ENCODE measurements at regions of chr12 and their contacts with region 1.

Region 1: DNA sequence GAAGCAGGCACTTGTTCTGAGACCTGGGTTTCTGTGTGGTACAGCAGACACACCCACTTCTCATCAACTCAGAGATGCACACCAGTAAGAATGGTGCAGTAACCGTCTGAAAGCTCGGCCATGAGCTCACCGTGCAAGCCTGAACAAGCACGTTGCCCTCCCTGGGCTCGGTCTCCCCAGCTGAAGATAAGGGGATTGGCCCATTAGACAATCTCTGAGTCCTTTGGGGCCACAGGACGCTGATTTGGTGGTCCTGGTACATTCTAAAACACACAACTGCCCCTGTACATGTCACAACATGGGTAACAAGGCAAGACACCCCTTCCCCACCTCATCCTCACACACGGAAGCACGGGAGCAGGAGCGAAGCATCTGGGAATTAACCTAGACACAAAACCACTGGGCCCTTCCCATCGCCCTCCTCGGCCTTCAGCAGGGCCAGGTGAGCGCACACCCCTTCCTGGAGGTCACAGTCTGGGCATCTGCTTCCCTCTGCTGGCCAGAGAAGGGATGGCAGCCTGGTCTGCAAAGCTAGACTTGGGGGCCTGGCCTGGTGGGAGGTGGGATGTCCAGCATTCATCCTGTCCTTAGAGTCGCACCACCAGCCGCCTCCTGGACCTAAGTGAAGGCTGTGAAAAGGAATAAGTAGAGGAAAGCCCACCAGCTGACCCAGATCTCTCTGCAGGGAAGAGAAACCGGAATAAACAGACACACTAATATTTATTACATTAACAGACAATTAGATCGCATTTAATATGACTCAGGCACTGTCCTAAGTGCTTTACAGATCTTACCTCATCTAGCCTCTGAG is 18.9 kb upstream of the SMUG1 start:
- DNase-seq: peak; percentile 69 to 96
- H3K4me3 ChIP-seq: no peak overlapping the region
- CTCF ChIP-seq: peak in 1 of 3 donors; percentile 68
- POLR2A ChIP-seq: no peak

Region 2: GRCh38 chr12:54005853-54006686 is 201.6 kb before region 1 on chr12:
- intact Hi-C with region 1: loop called (anchors 2 kb)
- DNase-seq: peak; percentile 90 to 98
- H3K4me3 ChIP-seq: no peak overlapping the region
- CTCF ChIP-seq: peak in 1 of 3 donors; percentile 72
- POLR2A ChIP-seq: no peak

Region 3: GRCh38 chr12:54175130-54175963 is 32.3 kb before region 1 on chr12:
- intact Hi-C with region 1: no loop called
- DNase-seq: no peak
- H3K4me3 ChIP-seq: no peak overlapping the region
- CTCF ChIP-seq: no peak
- POLR2A ChIP-seq: no peak

Region 4: GRCh38 chr12:54285150-54286041 is 77.7 kb after region 1 on chr12:
- intact Hi-C with region 1: no loop called
- DNase-seq: no peak
- H3K4me3 ChIP-seq: no peak overlapping the region
- CTCF ChIP-seq: no peak
- POLR2A ChIP-seq: no peak

Measured in lower leg skin (tissue), 4 donors.